Right ventricle myocardium superior (tissue), 1 donor: ENCODE measurements at regions of chr7 and their contacts with region 1.

Region 1: DNA sequence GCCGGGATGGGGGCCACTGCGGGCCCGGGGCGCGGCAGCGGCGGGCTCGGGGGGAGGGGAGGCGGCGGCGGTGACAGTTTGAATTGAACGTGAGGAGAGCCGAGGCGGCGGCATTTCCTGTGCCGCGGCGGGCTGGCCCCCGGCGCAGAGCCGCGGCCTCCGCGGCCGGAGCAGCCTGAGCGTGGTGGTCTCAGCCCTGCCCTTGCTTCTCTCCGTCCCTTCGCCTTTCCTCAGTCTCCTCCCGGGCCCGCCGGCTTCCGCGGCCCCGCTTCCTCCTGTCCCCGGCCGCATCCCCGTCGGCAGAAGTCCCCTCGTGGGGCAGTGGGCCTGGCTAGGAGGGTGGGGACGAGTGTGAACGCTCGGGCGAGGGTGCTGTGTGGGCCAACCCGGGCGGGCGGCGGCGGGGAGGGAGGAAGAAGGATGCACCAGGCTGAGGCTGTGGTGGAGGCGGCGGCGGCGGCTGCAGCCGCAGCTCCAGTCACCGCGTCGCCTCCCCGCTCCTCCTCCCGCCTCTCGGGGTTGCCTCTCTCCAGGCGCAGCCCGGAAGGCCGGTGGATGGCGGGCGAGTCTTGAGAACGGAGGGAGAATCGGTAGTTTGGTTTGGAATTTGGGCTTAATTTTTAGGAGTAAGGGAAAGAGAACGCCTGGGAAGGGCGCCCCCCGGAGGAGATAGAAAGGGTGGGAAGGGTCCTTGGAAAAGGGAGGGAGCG is 690 bp downstream of the SEPTIN7 start:
- DNase-seq: peak; percentile 84
- ATAC-seq: peak; percentile 59

Region 2: GRCh38 chr7:35530124-35531109 is 271.1 kb before region 1 on chr7:
- intact Hi-C with region 1: no loop called
- DNase-seq: no peak
- ATAC-seq: no peak

Region 3: DNA sequence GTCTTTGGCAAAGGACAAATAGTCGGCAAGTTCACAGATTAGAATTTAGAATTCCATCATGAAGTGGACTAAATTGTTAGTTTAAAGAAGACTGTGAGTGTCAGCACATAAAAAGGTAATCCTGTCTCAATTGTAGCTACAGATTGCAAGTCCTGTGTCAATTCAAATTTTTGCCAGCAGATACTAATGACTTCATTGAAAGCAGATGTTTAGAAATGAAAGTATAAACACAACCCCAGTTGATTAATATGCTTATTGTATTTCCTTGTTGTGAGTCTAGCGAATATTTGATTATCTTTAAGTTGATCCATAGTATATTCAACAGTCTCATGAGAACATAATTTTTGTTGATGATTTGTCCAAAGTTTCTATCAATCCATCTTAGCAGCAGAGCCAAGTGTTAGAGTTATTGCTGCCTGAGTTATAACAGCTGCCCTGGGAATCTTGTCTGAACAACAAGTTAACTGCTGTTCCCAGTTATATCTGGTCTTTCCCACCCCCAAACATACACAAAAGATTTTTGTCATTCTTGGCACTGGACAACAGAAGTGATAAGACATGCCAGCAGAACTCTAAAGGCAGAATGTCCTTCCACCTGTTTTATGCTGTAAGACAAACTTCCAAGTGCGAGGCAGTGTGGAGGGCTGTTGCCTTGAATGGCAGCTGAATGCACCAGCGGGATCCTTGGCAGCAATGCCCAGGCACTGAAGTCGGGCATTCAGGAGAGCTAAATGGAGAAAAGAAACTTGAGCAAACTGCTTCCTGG is 85.3 kb before region 1 on chr7:
- intact Hi-C with region 1: loop called (anchors 5 kb)
- DNase-seq: peak; percentile 44
- ATAC-seq: peak; percentile 80

Region 4: DNA sequence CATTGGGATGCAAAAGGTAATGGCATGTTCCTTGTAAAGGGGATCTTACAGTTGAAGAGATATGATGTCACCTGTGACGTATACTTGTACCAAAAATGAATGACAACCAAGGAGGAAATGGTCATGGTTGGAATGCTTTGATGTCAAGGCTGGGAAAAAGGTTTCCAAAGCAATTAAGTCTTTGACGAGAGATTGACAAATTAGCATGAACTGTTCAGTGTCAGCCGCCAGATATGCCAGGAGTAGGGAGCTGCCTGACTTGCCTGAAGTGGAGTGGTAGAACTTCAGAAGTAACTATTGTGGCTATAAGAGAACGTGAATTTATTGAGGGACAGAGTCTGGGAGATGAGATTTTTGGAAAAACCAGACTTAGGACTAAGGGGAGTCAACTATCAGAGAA is 87.5 kb after region 1 on chr7:
- intact Hi-C with region 1: no loop called
- DNase-seq: no peak
- ATAC-seq: no peak

Region 5: GRCh38 chr7:35900651-35901050 is 99.1 kb after region 1 on chr7:
- intact Hi-C with region 1: loop called (anchors 5 kb)
- DNase-seq: no peak
- ATAC-seq: no peak